CD4-positive, alpha-beta T cell (primary cell): ENCODE measurements at regions of chr16 and their contacts with region 1.

Region 1: GRCh38 chr16:53922807-53923571 is 219.0 kb downstream of the FTO start:
- DNase-seq: no peak
- ATAC-seq: no peak
- H3K4me3 ChIP-seq: no peak overlapping the region
- H3K4me3 Mint-ChIP-seq: no peak overlapping the region
- H3K27ac ChIP-seq: no peak overlapping the region
- H3K27ac Mint-ChIP-seq: no peak overlapping the region
- H3K4me1 ChIP-seq: no peaks in the 10 kb centered on the region
- H3K4me1 Mint-ChIP-seq: peaks cover 6% of the 10 kb centered on the region
- H3K27me3 ChIP-seq: no peaks in the 10 kb centered on the region
- H3K27me3 Mint-ChIP-seq: no peaks in the 10 kb centered on the region
- CTCF ChIP-seq: no peak

Region 2: DNA sequence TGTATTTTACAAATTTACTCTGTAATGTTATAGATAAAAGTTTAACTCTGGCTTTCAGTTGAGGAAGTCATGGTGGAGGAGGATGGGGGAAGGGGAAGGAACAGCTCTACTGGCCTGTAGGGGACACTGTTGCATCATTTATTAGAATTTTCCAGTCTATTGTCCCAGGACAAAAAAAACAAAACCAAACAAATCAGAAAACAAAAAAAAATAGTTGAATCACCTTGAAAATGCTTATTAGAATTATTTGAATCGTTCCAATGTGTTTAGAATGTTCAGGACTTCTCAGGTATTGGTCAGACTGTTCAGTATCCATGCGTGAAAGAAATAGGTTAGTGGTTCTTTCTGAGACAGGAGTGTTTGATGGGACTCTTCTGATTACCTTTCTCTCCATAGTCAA is 23.0 kb after region 1 on chr16:
- CTCF ChIA-PET with region 1: interaction called, 6 read pairs
- POLR2A ChIA-PET with region 1: no interaction called
- intact Hi-C with region 1: loop called in 1 of 2 experiments (anchors 1 kb)
- DNase-seq: peak in 3 of 14 experiments; percentile 19 to 26 (median 25)
- ATAC-seq: no peak
- H3K4me3 ChIP-seq: no peak overlapping the region
- H3K4me3 Mint-ChIP-seq: no peak overlapping the region
- H3K27ac ChIP-seq: no peak overlapping the region
- H3K27ac Mint-ChIP-seq: no peak overlapping the region
- H3K4me1 ChIP-seq: no peaks in the 10 kb centered on the region
- H3K4me1 Mint-ChIP-seq: peaks cover 14% of the 10 kb centered on the region
- H3K27me3 ChIP-seq: no peaks in the 10 kb centered on the region
- H3K27me3 Mint-ChIP-seq: no peaks in the 10 kb centered on the region
- CTCF ChIP-seq: peak; percentile 28